ENCODE measurements at regions of chr2 and their contacts with region 1.

Region 1: DNA sequence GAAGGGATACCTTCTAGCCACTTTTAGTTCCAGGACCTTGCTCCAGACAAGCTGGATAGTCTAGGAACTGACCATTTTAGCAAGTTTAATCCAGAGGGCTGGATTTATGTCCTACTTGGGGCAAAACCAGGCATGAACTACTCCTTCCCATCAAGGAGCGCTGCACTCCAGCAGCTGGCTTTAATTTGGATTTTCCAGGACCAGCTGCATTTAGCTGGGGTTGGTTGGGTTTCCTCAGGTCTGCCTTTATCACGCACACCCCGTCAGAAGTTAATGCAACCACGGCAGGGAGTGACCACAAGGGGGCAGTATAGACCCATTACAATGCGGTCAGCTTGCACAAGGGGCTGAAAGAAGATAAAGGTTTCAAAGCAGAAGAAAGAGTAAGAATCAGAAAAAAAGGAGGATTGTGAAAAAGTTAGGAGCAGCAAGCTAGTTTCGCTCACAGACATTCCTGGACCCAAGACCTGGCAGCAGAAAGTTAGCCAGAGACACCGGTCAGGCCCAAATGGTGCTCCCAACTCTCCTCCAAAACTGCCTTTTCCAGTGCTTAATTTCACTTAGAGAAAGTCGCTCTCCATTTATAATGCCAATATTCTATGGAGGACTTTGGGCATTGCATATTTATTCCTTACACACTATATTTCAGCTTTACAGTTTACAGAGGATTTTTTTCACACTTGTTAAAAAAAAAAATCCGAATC is 40.1 kb downstream of the SLC4A1AP start:
- DNase-seq: peak; percentile 90
- H3K4me3 ChIP-seq: no peak overlapping the region
- H3K27ac ChIP-seq: no peak overlapping the region
- H3K4me1 ChIP-seq: peaks cover 17% of the 10 kb centered on the region
- H3K27me3 ChIP-seq: no peaks in the 10 kb centered on the region
- CTCF ChIP-seq: peak; percentile 82 to 88
- POLR2A ChIP-seq: no peak

Region 2: DNA sequence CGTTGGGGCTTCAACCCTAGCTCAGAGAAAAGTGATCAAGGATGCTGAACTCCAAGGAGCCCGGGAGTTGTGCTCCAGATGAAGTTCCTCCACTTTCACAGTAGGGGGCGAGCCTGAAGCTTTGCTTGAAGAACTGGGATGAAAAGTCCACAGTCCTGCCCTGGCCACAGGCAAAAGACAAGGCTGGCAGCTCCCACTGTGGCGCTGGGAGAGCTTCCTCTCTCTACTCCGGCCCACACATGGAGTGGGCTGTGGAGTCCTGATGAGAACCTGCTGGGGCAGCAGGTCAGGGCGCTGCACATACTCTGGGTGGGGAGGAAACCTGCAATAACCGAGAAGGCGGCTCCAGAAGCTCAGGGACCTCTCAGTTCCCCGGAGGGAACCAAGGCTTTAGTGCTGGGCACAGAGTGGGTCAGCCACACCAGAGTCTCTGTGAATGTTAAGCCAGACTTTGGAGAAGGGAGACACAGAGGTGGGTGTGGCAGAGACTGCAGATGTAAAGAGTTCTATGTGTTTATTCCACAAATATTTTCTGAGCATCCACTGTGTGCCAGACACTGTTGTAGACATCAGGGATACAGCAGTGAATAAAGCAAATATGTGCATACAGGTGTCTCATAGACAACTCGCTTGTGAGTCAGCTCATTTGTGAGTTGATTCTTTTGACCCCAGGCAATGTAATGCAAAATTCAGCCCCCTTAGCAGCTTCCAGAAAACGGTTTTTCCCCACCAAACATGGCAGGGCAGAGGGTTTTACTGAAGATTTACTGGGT is 19.8 kb after region 1 on chr2:
- CTCF ChIA-PET with region 1: interaction called, 21 read pairs
- POLR2A ChIA-PET with region 1: no interaction called
- dilution Hi-C with region 1: no loop called
- intact Hi-C with region 1: loop called (anchors 1 kb)
- DNase-seq: peak; percentile 68
- H3K4me3 ChIP-seq: no peak overlapping the region
- H3K27ac ChIP-seq: no peak overlapping the region
- H3K4me1 ChIP-seq: peaks cover 14% of the 10 kb centered on the region
- H3K27me3 ChIP-seq: no peaks in the 10 kb centered on the region
- CTCF ChIP-seq: peak; percentile 78 to 90
- POLR2A ChIP-seq: no peak

Region 3: DNA sequence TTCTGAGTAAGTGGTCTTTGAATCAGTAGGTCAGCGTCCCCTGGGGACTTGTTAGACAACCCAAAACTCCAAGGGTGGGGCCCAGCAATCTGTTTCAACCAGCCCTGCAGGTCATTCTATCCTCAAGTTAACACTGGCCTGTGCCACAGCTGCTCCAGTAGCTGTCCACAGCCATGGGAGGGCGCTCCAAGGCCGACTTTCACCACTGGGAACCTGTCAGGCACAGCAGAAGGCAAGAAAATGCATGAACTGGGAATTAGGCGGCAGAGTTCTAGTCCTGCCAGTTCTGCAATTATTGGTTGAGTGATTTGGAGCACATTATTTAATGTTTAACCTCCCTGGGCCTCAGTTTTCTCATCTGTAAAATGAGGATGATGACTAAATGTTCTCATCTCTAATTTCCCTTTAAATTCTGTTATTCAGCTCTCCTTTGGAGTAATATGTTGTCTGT is 50.4 kb after region 1 on chr2:
- CTCF ChIA-PET with region 1: interaction called, 15 read pairs
- POLR2A ChIA-PET with region 1: no interaction called
- dilution Hi-C with region 1: no loop called
- intact Hi-C with region 1: loop called (anchors 1 kb)
- DNase-seq: peak; percentile 81
- H3K4me3 ChIP-seq: no peak overlapping the region
- H3K27ac ChIP-seq: no peak overlapping the region
- H3K4me1 ChIP-seq: no peaks in the 10 kb centered on the region
- H3K27me3 ChIP-seq: no peaks in the 10 kb centered on the region
- CTCF ChIP-seq: peak; percentile 94 to 97
- POLR2A ChIP-seq: no peak

Region 4: DNA sequence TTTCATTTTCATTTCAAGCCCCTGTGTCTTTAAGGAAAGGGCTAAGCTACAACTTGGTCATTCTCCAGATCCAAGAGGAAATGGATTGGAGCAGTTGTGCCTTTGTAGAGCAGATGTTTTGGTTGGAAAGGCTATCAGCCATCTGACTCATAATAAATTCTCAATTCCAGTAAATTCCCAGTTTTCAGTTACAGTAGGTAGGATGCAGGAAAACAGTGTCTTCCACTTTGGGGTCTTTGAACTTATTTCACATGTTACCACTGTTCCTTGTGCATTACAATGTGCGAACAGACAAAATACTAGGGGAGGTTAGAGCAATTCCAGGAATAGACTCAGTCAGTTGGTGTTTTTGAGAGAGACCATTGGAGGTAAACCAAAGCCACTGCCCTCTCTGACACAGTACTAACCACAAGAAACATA is 398.7 kb after region 1 on chr2:
- CTCF ChIA-PET with region 1: interaction called, 5 read pairs
- POLR2A ChIA-PET with region 1: no interaction called
- dilution Hi-C with region 1: no loop called
- intact Hi-C with region 1: loop called (anchors 5 kb)
- DNase-seq: peak; percentile 91
- H3K4me3 ChIP-seq: peak overlapping the region in 1 of 3 experiments; percentile 29
- H3K27ac ChIP-seq: peak overlapping the region; percentile 63
- H3K4me1 ChIP-seq: peaks cover 23% of the 10 kb centered on the region
- H3K27me3 ChIP-seq: no peaks in the 10 kb centered on the region
- CTCF ChIP-seq: no peak
- POLR2A ChIP-seq: peak; percentile 48

Region 5: DNA sequence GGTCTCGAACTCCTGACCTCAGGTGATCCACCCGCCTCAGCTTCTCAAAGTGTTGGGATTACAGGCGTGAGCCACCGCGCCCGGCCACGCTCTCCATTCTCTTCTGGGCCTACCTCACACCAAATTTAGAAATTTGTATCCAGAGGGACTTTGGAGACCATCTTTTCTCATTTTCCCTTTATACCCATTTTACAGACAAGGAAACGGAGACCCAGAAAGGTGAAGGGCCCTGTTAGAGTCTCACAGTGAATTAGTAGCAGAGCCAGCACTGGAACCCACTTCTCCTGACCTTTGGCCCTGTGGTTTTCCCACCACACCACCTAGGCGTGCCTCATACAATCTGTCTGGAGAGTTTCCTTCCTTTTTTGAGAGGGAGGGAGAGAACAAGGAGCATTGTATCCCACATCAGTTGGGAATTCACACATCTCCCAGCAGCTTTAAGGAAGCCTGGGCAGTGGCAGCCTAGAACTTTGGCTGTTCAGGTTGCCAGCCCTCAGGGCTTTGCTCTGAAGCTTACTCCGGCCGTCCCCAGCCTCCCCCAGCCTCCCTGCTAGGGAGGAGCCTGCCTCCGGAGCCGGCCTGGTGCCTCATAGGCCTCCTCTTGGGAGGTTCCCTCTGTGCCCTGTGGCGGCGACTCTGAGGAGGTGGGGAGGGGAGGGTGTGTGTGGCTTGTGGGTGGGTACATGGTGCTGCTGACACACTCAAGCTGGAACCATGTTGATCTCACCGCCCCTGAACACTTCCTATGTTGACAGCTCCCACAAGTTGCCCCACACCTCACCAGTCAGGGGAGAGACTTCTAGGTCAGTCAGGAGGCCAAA is 702.7 kb after region 1 on chr2:
- CTCF ChIA-PET with region 1: interaction called, 13 read pairs
- POLR2A ChIA-PET with region 1: interaction called, 4 read pairs
- dilution Hi-C with region 1: no loop called
- intact Hi-C with region 1: no loop called
- DNase-seq: peak; percentile 52
- H3K4me3 ChIP-seq: no peak overlapping the region
- H3K27ac ChIP-seq: peak overlapping the region; percentile 79
- H3K4me1 ChIP-seq: peaks cover 73% of the 10 kb centered on the region
- H3K27me3 ChIP-seq: no peaks in the 10 kb centered on the region
- CTCF ChIP-seq: peak in 1 of 2 donors; percentile 10
- POLR2A ChIP-seq: no peak

Measured in endothelial cell of umbilical vein (primary cell).